WTC11 (cell line): ENCODE measurements at regions of chrX and their contacts with region 1.

Region 1: DNA sequence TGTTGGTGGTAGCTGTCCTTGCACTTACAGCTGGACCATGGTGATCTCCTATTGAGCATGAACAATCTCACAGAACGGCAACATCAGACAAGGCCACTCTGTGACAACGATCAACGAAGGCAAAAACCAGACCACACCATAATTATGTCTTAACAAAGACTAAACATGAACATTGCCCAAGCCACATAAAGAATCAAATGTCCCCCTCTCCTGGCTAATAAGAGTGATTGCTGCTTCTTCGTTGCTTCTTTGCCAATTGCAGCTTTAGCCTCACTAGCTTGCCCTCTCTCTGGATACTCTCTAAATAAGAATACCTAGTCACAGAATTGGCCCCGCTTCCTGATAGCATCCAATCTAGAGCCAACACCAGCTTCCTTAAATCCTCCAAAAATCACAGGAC is 41.5 kb upstream of the PGRMC1 start:
- DNase-seq: no peak
- ATAC-seq: no peak
- H3K4me3 Mint-ChIP-seq: no peak overlapping the region
- H3K27ac Mint-ChIP-seq: no peak overlapping the region
- H3K4me1 Mint-ChIP-seq: no peaks in the 10 kb centered on the region
- H3K27me3 Mint-ChIP-seq: no peaks in the 10 kb centered on the region
- CTCF ChIP-seq: no peak

Region 2: DNA sequence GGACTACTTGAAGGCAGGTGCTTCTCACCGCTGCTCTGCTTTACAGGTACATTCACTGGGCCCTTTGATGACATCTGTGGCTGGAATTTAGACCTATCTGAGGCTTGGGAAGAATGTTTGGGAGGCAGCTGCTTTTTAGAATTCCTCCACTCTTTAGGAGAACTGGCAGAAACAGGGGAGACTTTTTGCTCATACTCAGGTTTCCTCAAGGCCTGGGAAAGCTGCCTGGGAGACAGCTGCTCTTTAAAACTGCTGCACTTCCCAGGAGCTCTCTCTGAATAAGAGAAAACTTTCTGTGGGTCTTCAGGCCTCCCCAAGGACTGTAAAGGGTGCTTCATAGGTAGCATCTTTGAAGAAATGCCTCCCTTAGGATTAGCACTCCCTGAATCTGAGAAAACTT is 107.5 kb before region 1 on chrX:
- CTCF ChIA-PET with region 1: no interaction called
- POLR2A ChIA-PET with region 1: no interaction called
- DNase-seq: no peak
- ATAC-seq: no peak
- H3K4me3 Mint-ChIP-seq: no peak overlapping the region
- H3K27ac Mint-ChIP-seq: no peak overlapping the region
- H3K4me1 Mint-ChIP-seq: peaks cover 13% of the 10 kb centered on the region
- H3K27me3 Mint-ChIP-seq: peaks cover 26% of the 10 kb centered on the region
- CTCF ChIP-seq: no peak

Region 3: DNA sequence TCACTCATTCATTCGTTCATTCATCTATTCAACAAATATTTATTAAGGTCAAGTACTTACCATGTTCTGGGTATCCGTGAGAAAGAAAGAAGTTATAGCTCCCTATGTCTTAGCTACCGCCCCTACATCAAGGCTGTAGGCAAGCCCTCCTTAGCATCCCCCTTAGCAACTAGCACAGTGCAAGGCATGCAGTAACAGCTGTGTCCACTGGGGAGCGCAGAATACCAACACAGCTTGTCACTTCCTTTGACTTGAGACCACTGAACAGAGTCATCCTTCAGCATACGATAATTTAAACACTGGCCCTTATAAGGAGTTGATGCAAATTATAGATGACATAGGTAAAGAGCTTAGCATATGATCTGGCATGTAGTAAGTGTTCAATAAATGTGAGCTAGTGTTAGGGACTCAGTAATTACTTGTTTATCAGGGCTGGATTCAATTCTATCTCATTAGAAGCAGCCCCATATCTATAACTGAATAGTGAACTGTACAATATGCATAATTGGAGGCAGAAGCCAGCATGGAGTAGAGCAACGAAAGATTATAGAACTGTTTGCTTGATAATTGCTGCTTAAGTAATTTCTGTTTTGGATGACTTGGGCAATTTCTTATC is 75.7 kb before region 1 on chrX:
- CTCF ChIA-PET with region 1: interaction called, 12 read pairs
- POLR2A ChIA-PET with region 1: no interaction called
- DNase-seq: peak; percentile 74
- ATAC-seq: peak; percentile 98
- H3K4me3 Mint-ChIP-seq: no peak overlapping the region
- H3K27ac Mint-ChIP-seq: no peak overlapping the region
- H3K4me1 Mint-ChIP-seq: peaks cover 4% of the 10 kb centered on the region; the same call in 1 of the 2 replicates
- H3K27me3 Mint-ChIP-seq: no peaks in the 10 kb centered on the region
- CTCF ChIP-seq: peak; percentile 39